PC-3 (cell line): ENCODE measurements at regions of chr17 and their contacts with region 1.

Region 1: DNA sequence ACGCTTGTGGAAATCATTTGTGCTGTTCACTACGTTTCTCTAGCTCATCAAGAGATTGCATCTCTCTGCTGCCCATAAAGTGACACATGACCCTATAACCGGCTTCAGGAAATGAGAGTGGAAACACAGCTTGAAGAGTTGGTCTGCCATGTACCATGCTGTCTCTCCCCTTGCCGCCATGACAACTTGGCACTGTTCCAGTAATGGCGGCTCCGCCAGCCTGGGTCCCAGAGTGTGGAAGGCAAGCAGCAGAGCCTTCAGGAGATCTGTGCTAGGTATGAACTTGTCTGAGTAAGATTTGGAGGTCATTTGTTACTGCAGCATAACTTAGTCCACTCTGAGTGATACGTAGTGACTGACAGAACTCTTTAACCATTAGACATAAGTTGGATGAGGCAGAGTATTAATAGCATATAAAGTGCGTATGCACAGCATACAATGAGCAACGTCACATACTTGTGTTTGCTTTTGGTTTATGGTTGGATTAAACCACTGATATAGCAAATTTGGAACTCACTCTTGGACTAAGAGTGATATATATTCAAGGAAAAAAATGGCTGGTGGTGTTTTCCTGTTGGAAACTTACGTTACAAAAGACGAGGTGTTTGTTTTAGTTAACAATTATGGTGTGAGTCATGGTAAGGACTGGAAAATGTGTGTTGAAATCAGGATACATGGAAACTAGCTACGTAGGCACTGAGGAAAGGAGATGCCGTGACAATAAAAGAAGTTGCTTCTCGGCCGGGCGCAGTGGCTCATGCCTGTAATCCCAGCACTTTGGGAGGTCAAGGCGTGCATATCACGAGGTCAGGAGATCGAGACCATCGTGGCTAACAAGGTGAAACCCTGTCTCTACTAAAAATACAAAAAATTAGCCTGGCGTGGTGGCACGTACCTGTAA is 24.4 kb upstream of the PMP22 start:
- DNase-seq: peak; percentile 95
- ATAC-seq: peak; percentile 88
- H3K4me3 ChIP-seq: peak overlapping the region; percentile 21; the same call in 1 of the 2 replicates
- H3K27ac ChIP-seq: peak overlapping the region; percentile 94
- H3K4me1 ChIP-seq: peaks cover 29% of the 10 kb centered on the region
- H3K27me3 ChIP-seq: no peaks in the 10 kb centered on the region
- CTCF ChIP-seq: no peak

Region 2: GRCh38 chr17:15307710-15308111 is 18.2 kb after region 1 on chr17:
- CTCF ChIA-PET with region 1: no interaction called
- POLR2A ChIA-PET with region 1: no interaction called
- intact Hi-C with region 1: no loop called
- DNase-seq: no peak
- ATAC-seq: no peak
- H3K4me3 ChIP-seq: no peak overlapping the region
- H3K27ac ChIP-seq: no peak overlapping the region
- H3K4me1 ChIP-seq: peaks cover 21% of the 10 kb centered on the region
- H3K27me3 ChIP-seq: no peaks in the 10 kb centered on the region
- CTCF ChIP-seq: no peak

Region 3: GRCh38 chr17:15341385-15341849 is 51.9 kb after region 1 on chr17 and contains the start of gene TEKT3:
- CTCF ChIA-PET with region 1: no interaction called
- POLR2A ChIA-PET with region 1: interaction called, 3 read pairs
- intact Hi-C with region 1: loop called (anchors 5 kb)
- DNase-seq: no peak
- ATAC-seq: no peak
- H3K4me3 ChIP-seq: no peak within 1 kb of the TSS
- H3K27ac ChIP-seq: peak within 1 kb of the TSS; percentile 25
- H3K4me1 ChIP-seq: peaks cover 22% of the 10 kb centered on the region
- H3K27me3 ChIP-seq: no peaks in the 10 kb centered on the region
- CTCF ChIP-seq: no peak
- total RNA-seq, gene TEKT3: not detected in 2 replicates